ENCODE measurements at regions of chr11 and their contacts with region 1.

Region 1: GRCh38 chr11:108222686-108223448 is at the start of gene ATM:
- DNase-seq: peak; percentile 100
- H3K4me3 ChIP-seq: peak within 1 kb of the TSS; percentile 81
- H3K27ac ChIP-seq: peak within 1 kb of the TSS; percentile 94
- H3K4me1 ChIP-seq: peaks cover 45% of the 10 kb centered on the region
- H3K27me3 ChIP-seq: no peaks in the 10 kb centered on the region
- CTCF ChIP-seq: peak; percentile 97
- total RNA-seq, gene ATM: 68.8 and 72.5 TPM in 2 replicates

Region 2: DNA sequence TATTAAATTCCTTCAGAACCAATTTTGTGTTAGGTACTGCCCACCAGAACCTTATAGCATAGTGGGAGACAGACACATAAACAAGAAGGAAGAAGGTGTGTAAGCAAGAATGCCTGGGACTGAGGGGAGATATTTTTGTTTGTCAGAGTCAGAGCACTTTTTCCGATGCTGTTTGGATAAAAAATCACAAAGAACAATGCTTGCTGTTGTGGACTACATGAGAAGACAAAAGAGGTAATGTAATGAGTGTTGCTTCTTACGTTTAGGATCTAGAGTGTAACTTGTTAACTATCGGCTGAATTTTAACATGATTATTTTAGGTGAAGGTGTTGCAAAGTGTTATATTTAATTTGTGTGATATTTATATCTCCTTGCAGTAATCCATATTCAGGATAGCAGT is 84.9 kb after region 1 on chr11:
- CTCF ChIA-PET with region 1: no interaction called
- POLR2A ChIA-PET with region 1: no interaction called
- intact Hi-C with region 1: no loop called
- DNase-seq: no peak
- H3K4me3 ChIP-seq: no peak overlapping the region
- H3K27ac ChIP-seq: no peak overlapping the region
- H3K4me1 ChIP-seq: no peaks in the 10 kb centered on the region
- H3K27me3 ChIP-seq: no peaks in the 10 kb centered on the region
- CTCF ChIP-seq: no peak

Region 3: GRCh38 chr11:108467091-108467823 is 244.4 kb after region 1 on chr11 and contains the start of gene C11orf65:
- CTCF ChIA-PET with region 1: no interaction called
- POLR2A ChIA-PET with region 1: no interaction called
- intact Hi-C with region 1: loop called (anchors 5 kb)
- DNase-seq: peak; percentile 99
- H3K4me3 ChIP-seq: peak within 1 kb of the TSS; percentile 50
- H3K27ac ChIP-seq: peak within 1 kb of the TSS; percentile 96
- H3K4me1 ChIP-seq: peaks cover 7% of the 10 kb centered on the region
- H3K27me3 ChIP-seq: no peaks in the 10 kb centered on the region
- CTCF ChIP-seq: no peak
- total RNA-seq, gene C11orf65: 0.43 and 0.59 TPM in 2 replicates

Region 4: DNA sequence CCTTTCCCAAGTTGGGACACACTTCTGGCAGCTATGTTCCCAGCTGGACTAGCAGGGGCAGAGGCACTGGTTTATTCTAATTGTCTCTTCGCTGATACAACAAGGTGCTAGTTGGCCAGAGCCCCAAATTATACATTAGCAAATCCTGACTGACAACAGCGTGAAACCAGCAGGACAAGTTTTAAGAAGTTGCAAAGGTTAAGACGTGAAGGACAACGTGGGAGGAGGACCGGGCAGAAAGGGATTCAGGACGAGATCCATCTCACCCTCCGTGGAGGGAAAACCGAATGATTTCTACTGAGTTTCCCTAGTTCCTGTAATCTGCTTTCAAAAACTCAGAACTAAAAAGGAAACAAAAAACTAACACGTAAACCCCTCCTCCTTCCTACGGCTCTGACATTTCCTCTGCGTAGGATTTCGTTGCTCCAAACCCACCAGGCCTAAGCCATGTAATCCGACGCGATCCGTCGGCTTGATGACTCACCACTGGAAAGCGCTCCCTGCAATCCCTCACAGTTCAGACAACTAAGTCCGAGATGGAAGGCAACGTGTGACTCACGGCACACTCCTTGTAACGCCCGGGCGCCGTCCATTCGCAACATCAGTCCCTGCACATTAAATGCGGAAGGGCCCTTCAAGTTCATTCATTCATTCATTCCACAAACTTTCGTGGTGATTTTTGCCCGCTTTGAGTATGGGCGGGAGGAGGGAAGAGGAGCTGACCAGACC is 274.6 kb after region 1 on chr11:
- CTCF ChIA-PET with region 1: no interaction called
- POLR2A ChIA-PET with region 1: no interaction called
- intact Hi-C with region 1: loop called (anchors 10 kb)
- DNase-seq: peak; percentile 98
- H3K4me3 ChIP-seq: peak overlapping the region; percentile 62
- H3K27ac ChIP-seq: peak overlapping the region; percentile 97
- H3K4me1 ChIP-seq: peaks cover 14% of the 10 kb centered on the region
- H3K27me3 ChIP-seq: no peaks in the 10 kb centered on the region
- CTCF ChIP-seq: no peak

Region 5: GRCh38 chr11:108647701-108648527 is 425.0 kb after region 1 on chr11:
- CTCF ChIA-PET with region 1: interaction called, 3 read pairs
- POLR2A ChIA-PET with region 1: no interaction called
- intact Hi-C with region 1: loop called (anchors 1 kb)
- DNase-seq: peak; percentile 86
- H3K4me3 ChIP-seq: no peak overlapping the region
- H3K27ac ChIP-seq: no peak overlapping the region
- H3K4me1 ChIP-seq: no peaks in the 10 kb centered on the region
- H3K27me3 ChIP-seq: no peaks in the 10 kb centered on the region
- CTCF ChIP-seq: peak; percentile 96

Region 6: GRCh38 chr11:108664730-108665525 is 442.1 kb after region 1 on chr11 and contains the start of gene DDX10:
- CTCF ChIA-PET with region 1: no interaction called
- POLR2A ChIA-PET with region 1: no interaction called
- intact Hi-C with region 1: loop called (anchors 5 kb)
- DNase-seq: peak; percentile 99
- H3K4me3 ChIP-seq: peak within 1 kb of the TSS; percentile 76
- H3K27ac ChIP-seq: peak within 1 kb of the TSS; percentile 72
- H3K4me1 ChIP-seq: peaks cover 9% of the 10 kb centered on the region
- H3K27me3 ChIP-seq: no peaks in the 10 kb centered on the region
- CTCF ChIP-seq: no peak
- total RNA-seq, gene DDX10: 63.7 and 72.2 TPM in 2 replicates

Measured in A673 (cell line).